ENCODE measurements at regions of chr17 and their contacts with region 1.

Region 1: DNA sequence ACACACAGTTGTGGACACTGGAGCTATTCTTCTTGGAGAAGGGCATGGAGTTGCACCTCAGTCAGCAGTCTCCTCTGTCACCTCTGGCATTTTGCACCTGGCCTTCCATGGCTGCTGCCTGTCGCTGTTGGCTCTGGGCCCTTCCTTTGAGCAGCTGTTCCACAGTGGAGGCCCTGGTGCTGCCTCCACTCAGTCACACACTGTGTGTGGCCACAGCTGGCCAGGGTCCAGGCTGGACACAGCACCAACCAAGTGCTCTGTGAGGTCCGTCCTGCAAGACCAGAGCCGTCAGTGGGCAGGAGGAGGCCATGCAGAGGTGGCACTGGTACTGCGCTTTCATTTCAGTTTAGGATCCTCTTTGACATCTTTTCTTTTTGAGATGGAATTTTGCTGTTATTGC is 21.6 kb upstream of the MED9 start:
- DNase-seq: no peak
- H3K4me3 ChIP-seq: no peak overlapping the region
- H3K27ac ChIP-seq: no peak overlapping the region
- H3K4me1 ChIP-seq: no peaks in the 10 kb centered on the region
- CTCF ChIP-seq: no peak

Region 2: GRCh38 chr17:17227608-17228501 is 227.3 kb before region 1 on chr17:
- CTCF ChIA-PET with region 1: no interaction called
- POLR2A ChIA-PET with region 1: no interaction called
- intact Hi-C with region 1: no loop called
- DNase-seq: no peak
- H3K4me3 ChIP-seq: no peak overlapping the region
- H3K27ac ChIP-seq: no peak overlapping the region
- H3K4me1 ChIP-seq: no peaks in the 10 kb centered on the region
- CTCF ChIP-seq: no peak

Region 3: GRCh38 chr17:17395246-17395802 is 59.8 kb before region 1 on chr17:
- CTCF ChIA-PET with region 1: interaction called, 10 read pairs
- POLR2A ChIA-PET with region 1: no interaction called
- intact Hi-C with region 1: no loop called
- DNase-seq: no peak
- H3K4me3 ChIP-seq: no peak overlapping the region
- H3K27ac ChIP-seq: no peak overlapping the region
- H3K4me1 ChIP-seq: no peaks in the 10 kb centered on the region
- CTCF ChIP-seq: no peak

Region 4: GRCh38 chr17:17681187-17681848 is 226.1 kb after region 1 on chr17 and contains the start of gene RAI1:
- CTCF ChIA-PET with region 1: no interaction called
- POLR2A ChIA-PET with region 1: no interaction called
- intact Hi-C with region 1: no loop called
- DNase-seq: peak; percentile 85
- H3K4me3 ChIP-seq: peak within 1 kb of the TSS; percentile 92
- H3K27ac ChIP-seq: peak within 1 kb of the TSS; percentile 76
- H3K4me1 ChIP-seq: peaks cover 52% of the 10 kb centered on the region
- CTCF ChIP-seq: peak; percentile 67; the same call in 1 of the 2 replicates
- total RNA-seq, gene RAI1: 17.1 and 20.1 TPM in 2 replicates

Measured in OCI-LY7 (cell line).